Heart right ventricle (tissue), 16 donors: ENCODE measurements at regions of chr1 and their contacts with region 1.

Region 1: DNA sequence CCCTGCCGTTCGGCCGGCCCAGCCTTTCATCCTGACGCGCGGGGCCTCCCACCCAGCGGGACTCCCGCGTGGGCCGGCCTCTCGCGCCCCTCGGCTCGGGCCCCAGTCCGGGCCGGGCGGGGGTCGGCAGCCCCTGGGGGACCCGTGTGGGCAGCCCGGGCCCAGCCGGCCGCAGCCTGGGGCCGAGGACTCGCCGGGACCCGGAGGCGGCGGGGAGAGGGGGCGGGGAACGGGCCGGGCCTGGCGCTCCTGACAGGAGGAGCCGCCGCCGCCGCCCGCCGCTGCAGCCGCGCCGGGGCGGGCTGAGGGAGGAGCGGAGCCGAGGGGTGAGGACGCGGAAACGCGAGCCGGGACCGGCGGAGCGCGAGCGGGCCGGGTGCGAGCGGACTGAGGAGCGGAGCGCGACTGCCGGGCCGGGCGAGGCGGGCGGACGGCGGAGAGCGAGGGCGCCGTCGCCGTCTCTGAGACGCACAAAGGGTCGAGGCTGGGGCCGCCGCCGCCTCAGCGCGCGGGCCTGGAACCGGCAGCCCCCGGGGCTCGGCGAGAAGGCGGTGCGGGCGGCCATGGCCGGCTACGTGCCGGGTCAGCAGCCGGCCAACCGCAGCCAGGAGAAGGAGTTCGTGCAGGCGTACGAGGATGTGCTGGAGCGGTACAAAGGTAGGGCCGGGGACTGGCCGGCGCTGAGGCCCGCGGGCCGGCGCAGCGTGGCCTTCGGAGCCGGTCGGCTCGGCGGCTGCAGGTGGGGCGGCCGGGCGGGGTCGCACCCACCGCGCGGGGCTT is 79.1 kb downstream of the NDUFS5 start:
- DNase-seq: peak; percentile 72 to 83
- ATAC-seq: peak; percentile 61 to 91 (median 80)
- H3K4me3 ChIP-seq: peak overlapping the region; percentile 52 to 89 (median 83)
- H3K27ac ChIP-seq: peak overlapping the region; percentile 82 to 98 (median 94)
- H3K4me1 ChIP-seq: peaks cover 7 to 76% (median 63%) of the 10 kb centered on the region in 9 donors
- H3K27me3 ChIP-seq: peaks cover 0 to 4% (median 0%) of the 10 kb centered on the region in 7 donors
- CTCF ChIP-seq: no peak

Region 2: GRCh38 chr1:39132505-39133339 is 27.5 kb after region 1 on chr1:
- intact Hi-C with region 1: loop called in 3 of 10 experiments (anchors 2 to 5 kb)
- DNase-seq: peak; percentile 74 to 88
- ATAC-seq: peak; percentile 76 to 95 (median 91)
- H3K4me3 ChIP-seq: peak overlapping the region in 2 of 10 donors; percentile 6 to 9
- H3K27ac ChIP-seq: peak overlapping the region in 9 of 10 donors; percentile 69 to 84 (median 75)
- H3K4me1 ChIP-seq: peaks cover 5 to 76% (median 61%) of the 10 kb centered on the region in 9 donors
- H3K27me3 ChIP-seq: no peaks in the 10 kb centered on the region
- CTCF ChIP-seq: peak in 8 of 9 donors; percentile 26 to 69 (median 48)

Region 3: DNA sequence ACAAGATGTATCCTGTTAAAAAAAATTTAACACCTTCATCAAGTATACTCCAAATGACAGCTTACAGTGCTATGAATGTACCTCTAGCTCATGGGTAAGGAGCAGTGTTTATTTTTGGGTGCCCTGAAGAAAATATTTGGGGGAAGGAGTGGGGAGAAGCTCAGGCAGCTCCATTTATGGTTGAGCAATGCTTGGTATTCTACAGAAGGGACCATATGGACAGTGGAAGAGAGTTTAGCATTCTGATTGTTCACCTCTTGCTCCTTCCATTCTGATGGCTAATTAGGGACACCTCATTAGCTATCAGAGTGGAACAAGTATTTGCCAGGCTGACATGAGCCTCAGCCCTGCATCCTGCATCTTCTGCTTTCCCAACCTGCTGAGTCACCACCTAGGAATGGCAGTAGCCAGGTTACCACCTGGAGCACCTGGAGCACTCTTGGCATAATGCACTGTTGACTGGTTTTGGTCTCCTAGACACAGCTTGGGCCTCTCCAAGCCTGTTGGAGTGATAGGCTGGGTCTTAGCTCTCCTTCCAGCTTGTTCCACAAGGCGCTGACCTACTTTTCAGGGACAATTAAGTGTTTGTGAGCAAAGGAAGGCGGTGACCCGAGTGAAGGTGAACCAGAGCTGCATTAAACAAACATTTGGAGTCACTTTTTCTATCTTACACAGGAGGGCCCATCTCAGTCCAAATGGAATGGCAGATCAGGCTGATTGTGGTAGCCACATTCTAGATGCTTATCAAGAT is 37.3 kb after region 1 on chr1:
- intact Hi-C with region 1: loop called in 2 of 10 experiments (anchors 5 kb)
- DNase-seq: no peak
- ATAC-seq: peak in 5 of 8 donors; percentile 41 to 55 (median 51)
- H3K4me3 ChIP-seq: no peak overlapping the region
- H3K27ac ChIP-seq: peak overlapping the region in 2 of 10 donors; percentile 7 to 32
- H3K4me1 ChIP-seq: peaks cover 8 to 40% (median 22%) of the 10 kb centered on the region in 9 donors
- H3K27me3 ChIP-seq: no peaks in the 10 kb centered on the region
- CTCF ChIP-seq: no peak

Region 4: GRCh38 chr1:39154553-39155421 is 49.5 kb after region 1 on chr1:
- intact Hi-C with region 1: loop called in 1 of 10 experiments (anchors 5 kb)
- DNase-seq: peak in 1 of 2 donors; percentile 63
- ATAC-seq: peak; percentile 83 to 92 (median 86)
- H3K4me3 ChIP-seq: no peak overlapping the region
- H3K27ac ChIP-seq: peak overlapping the region in 7 of 10 donors; percentile 16 to 58 (median 48)
- H3K4me1 ChIP-seq: peaks cover 16 to 88% (median 74%) of the 10 kb centered on the region in 9 donors
- H3K27me3 ChIP-seq: no peaks in the 10 kb centered on the region
- CTCF ChIP-seq: no peak

Region 5: GRCh38 chr1:39189592-39190041 is 84.4 kb after region 1 on chr1:
- intact Hi-C with region 1: loop called (anchors 1 to 5 kb)
- DNase-seq: no peak
- ATAC-seq: no peak
- H3K4me3 ChIP-seq: no peak overlapping the region
- H3K27ac ChIP-seq: no peak overlapping the region
- H3K4me1 ChIP-seq: peaks cover 3 to 67% (median 37%) of the 10 kb centered on the region in 9 donors
- H3K27me3 ChIP-seq: no peaks in the 10 kb centered on the region
- CTCF ChIP-seq: no peak

Region 6: DNA sequence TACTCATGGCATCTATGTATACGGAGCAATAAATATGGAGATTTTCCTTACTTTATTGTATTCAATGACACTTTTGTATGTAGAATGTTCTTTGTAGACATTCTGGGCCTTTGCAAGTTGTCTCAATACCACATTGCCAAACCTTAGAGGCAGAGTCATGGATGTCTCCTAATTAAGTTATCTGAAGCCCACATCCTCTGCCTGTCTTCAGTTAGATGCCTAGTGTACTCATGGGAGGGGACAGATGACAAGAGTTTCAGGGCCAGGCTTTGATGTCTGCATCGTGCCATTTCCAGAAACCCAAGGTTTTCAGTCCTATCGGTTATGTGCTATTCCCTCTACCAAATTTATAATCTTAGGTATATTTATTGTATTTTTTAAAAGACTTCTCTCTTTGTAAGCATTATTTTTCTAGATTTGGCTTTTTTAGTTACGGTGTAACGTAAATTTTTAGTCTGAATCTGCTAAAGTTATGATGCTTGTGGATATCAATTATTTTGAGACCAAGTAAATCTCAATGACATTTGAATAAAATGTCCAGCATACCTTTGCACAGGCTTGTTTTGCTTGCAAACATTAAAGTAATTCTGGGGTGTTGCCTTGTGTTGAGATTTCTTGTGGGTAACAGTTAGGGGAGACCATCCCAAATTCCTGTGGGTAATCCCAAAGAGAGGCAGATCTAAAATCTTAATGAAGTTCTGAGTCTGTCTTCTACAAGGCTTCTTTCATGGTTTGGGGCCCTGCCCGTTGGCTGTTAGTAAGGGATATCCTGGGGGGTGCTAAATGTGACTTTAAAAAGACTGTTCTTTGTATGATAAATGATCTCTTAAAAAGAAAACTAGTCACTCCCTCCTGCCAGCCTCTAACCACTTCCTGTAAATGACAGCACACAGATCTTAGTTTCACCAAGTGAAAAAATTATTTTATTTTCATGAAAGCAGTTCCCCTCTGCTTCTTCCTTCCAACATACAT is 91.3 kb after region 1 on chr1:
- intact Hi-C with region 1: loop called (anchors 1 to 5 kb)
- DNase-seq: peak in 1 of 2 donors; percentile 21
- ATAC-seq: no peak
- H3K4me3 ChIP-seq: no peak overlapping the region
- H3K27ac ChIP-seq: peak overlapping the region in 5 of 10 donors; percentile 30 to 83 (median 44)
- H3K4me1 ChIP-seq: peaks cover 3 to 66% (median 46%) of the 10 kb centered on the region in 9 donors
- H3K27me3 ChIP-seq: no peaks in the 10 kb centered on the region
- CTCF ChIP-seq: no peak

Region 7: DNA sequence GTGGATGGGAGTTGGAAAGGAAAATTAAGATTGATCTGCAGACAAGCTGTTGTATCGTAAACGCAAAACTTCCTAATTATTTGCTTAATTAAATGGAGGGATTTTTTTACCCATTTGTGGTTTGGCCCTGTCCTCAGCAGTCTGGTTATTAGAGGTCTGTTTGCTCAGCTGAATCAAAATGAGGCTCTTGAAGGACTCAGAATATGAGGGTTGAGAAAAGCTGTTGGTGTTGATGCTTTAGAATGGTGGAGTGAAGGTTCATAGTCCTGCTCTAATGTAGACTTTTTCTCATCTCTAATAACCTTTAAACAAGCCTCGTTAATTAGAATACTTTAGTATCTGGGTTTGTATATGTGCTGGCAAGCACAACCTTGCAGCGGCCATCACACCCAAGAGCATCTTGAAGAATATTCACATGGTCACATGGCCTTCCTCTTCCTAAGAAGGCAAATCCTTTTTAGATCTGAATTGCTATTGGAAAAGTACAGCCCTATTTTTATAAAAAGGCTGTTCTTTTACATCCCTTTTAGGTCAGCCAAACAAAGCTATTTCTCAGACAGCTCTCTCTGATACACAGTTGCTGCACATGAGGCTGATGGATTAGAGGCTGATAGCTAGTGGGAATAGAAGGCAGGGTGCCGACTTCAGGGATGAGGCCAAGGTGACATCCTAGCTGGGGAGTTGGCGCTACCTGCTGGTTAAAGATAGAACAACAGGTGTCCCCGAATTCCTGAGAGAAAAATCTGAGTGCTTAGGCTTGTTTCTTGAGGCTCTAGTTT is 153.1 kb after region 1 on chr1:
- intact Hi-C with region 1: loop called in 9 of 10 experiments (anchors 1 to 10 kb)
- DNase-seq: peak; percentile 26 to 75
- ATAC-seq: peak; percentile 73 to 87 (median 86)
- H3K4me3 ChIP-seq: no peak overlapping the region
- H3K27ac ChIP-seq: peak overlapping the region in 7 of 10 donors; percentile 11 to 63 (median 49)
- H3K4me1 ChIP-seq: peaks cover 0 to 43% (median 22%) of the 10 kb centered on the region in 9 donors
- H3K27me3 ChIP-seq: no peaks in the 10 kb centered on the region
- CTCF ChIP-seq: peak; percentile 80 to 91 (median 85)